GM12878 (cell line): ENCODE measurements at regions of chr2 and their contacts with region 1.

Region 1: DNA sequence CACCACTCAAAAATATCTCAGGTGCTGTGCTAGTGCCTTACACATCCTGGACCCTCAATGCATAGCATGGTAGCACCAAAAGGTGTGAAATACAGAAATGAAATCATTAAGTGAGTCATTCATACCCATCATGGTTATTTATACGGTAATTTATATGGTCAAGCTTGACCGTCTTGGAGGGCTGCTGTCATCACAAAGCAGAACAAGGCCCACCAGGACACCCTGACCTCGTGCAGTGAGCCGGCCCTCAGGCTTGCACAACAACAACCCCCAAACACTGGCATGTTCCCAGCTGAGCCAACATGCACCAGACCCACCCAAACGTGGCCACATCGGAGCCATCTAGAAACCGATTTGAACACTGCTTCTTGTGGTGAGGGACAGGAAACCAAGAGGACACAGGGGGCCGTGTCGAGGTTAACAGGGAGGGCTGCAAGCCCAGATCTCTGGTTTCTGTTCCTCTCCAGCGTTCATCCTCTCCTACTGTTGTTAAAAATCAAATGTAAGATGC is 378.5 kb upstream of the ID2 start:
- DNase-seq: peak; percentile 95
- ATAC-seq: peak; percentile 77
- H3K4me3 ChIP-seq: no peak overlapping the region
- H3K27ac ChIP-seq: peak overlapping the region; percentile 81
- H3K4me1 ChIP-seq: peaks cover 74% of the 10 kb centered on the region
- H3K27me3 ChIP-seq: no peaks in the 10 kb centered on the region
- CTCF ChIP-seq: peak in 1 of 3 experiments; percentile 4; a peak in 1 of 6 replicates
- EP300 ChIP-seq: peak; percentile 92 to 94
- POLR2A ChIP-seq: peak; percentile 27; the same call in 1 of the 2 replicates
- RAD21 ChIP-seq: peak; percentile 35; the same call in 1 of the 2 replicates

Region 2: DNA sequence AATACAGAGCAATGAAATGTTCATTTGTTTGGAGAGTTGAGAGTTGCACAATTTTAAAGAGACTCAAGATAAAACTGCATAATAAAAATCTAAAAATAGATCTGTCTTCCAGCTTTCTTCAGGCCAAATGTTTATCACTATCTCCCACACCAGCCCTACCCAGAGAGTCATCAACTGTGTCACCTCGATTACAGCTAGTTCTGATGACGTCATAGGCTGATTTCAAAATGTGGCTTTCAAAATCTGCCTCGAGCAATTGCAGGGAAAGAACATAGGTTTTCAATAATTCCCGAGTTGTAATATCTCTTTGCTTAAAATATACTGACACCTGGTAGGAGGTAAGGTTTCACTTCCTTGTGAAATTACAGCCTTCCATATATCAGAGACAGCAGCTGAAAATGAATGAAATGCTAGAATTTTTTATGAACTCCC is 299.1 kb before region 1 on chr2:
- CTCF ChIA-PET with region 1: no interaction called
- POLR2A ChIA-PET with region 1: no interaction called
- RAD21 ChIA-PET with region 1: interaction called, 3 read pairs
- SMC1A ChIA-PET with region 1: interaction called, 3 read pairs
- in situ Hi-C with region 1: no loop called
- intact Hi-C with region 1: loop called (anchors 2 kb)
- DNase-seq: no peak
- ATAC-seq: peak; percentile 46
- H3K4me3 ChIP-seq: no peak overlapping the region
- H3K27ac ChIP-seq: no peak overlapping the region
- H3K4me1 ChIP-seq: peaks cover 4% of the 10 kb centered on the region; the same call in 1 of the 2 replicates
- H3K27me3 ChIP-seq: no peaks in the 10 kb centered on the region
- CTCF ChIP-seq: no peak
- EP300 ChIP-seq: peak; percentile 69 to 79; a peak in 2 of 4 replicates
- POLR2A ChIP-seq: no peak
- RAD21 ChIP-seq: no peak

Region 3: DNA sequence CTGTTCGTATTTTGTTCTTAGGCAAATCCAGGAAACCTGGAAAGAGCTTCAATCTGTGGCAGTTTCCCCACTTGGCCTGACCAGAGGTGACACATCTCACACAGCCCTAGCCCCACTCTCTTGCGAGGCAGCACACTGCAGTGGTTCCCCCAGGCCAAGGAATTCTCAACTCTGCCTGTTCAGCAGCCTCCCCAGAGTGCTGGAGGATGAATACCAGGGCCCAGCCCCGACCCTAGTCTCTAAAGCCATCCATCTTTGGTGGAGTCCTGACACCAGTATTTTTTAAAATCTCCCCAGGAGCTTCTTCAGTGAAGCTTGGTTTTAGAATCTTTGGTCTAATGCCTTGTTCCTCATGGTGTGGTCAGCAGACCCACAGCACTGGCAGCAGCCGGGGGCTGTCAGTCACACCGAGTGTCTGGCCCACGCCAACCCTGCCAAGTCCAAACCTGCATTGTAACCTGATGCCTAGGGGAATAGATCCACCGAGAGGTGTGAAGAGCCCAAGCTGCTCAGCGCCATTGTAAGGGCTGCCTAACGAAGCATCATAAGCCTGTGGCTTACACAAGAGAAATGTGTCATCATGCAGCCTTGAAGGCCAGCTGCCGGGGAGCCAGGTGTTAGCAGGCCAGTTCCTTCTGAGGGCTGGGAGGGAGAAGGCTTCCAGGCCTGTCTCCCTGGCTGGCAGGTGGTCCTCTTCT is 50.2 kb before region 1 on chr2:
- CTCF ChIA-PET with region 1: no interaction called
- POLR2A ChIA-PET with region 1: interaction called, 3 read pairs
- RAD21 ChIA-PET with region 1: interaction called, 9 read pairs
- SMC1A ChIA-PET with region 1: interaction called, 4 read pairs
- in situ Hi-C with region 1: no loop called
- intact Hi-C with region 1: loop called (anchors 1 kb)
- DNase-seq: peak; percentile 48
- ATAC-seq: peak; percentile 98
- H3K4me3 ChIP-seq: no peak overlapping the region
- H3K27ac ChIP-seq: no peak overlapping the region
- H3K4me1 ChIP-seq: peaks cover 20% of the 10 kb centered on the region
- H3K27me3 ChIP-seq: no peaks in the 10 kb centered on the region
- CTCF ChIP-seq: no peak
- EP300 ChIP-seq: peak; percentile 38 to 47; a peak in 1 of 4 replicates
- POLR2A ChIP-seq: no peak
- RAD21 ChIP-seq: no peak

Region 4: GRCh38 chr2:8290771-8291352 is 12.5 kb before region 1 on chr2:
- CTCF ChIA-PET with region 1: interaction called, 20 read pairs
- POLR2A ChIA-PET with region 1: no interaction called
- RAD21 ChIA-PET with region 1: interaction called, 4 read pairs
- SMC1A ChIA-PET with region 1: interaction called, 18 read pairs
- in situ Hi-C with region 1: no loop called
- intact Hi-C with region 1: no loop called
- DNase-seq: no peak
- ATAC-seq: no peak
- H3K4me3 ChIP-seq: no peak overlapping the region
- H3K27ac ChIP-seq: no peak overlapping the region
- H3K4me1 ChIP-seq: no peaks in the 10 kb centered on the region
- H3K27me3 ChIP-seq: no peaks in the 10 kb centered on the region
- CTCF ChIP-seq: no peak
- EP300 ChIP-seq: no peak
- POLR2A ChIP-seq: no peak
- RAD21 ChIP-seq: no peak

Region 5: DNA sequence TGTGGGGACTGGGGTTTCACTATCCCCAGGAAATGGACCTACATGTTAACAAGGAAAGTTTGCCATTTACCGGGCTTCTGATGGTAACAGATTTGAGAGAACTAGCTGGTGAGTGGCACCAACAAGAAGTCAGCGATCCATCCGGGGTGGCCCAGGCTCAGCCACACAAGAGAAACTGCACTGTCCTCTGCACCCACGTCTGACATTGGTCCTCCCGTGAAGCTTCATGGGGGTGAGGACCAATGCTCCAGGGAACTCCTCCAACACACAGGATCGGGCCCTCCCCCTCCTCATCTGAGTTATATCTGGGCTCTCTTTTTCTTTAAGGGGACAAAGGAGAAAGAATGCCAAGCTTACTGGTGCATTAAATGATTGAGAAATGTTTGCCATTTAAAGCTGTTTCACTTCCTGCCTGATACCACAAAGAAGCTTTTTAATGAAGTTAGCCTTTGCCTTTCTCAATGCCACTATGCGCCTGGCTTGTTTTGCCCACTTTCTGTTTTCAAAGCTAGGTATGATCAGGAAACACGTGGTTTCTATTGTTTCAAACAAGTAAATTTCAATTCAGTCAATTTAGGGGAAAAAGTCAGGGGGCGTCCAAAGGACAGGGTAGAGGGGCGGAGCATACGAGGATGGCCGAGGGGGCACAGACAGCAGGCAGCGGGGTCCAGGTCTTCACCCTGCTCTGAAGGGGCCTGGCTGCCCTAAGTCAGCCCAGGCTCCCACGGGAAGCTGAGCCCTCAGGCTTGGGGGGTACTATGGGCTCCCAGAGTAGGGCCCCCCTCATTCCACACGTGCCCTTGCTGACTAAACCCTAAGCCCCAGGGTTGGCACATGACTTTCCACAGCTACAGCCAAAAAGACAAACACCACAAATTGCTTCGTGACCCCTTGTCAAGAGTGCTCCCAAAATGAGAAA is 174.4 kb after region 1 on chr2:
- CTCF ChIA-PET with region 1: no interaction called
- POLR2A ChIA-PET with region 1: interaction called, 4 read pairs
- RAD21 ChIA-PET with region 1: no interaction called
- SMC1A ChIA-PET with region 1: interaction called, 5 read pairs
- in situ Hi-C with region 1: loop called (anchors 5 kb)
- intact Hi-C with region 1: loop called (anchors 2 kb)
- DNase-seq: peak; percentile 95
- ATAC-seq: peak; percentile 52
- H3K4me3 ChIP-seq: peak overlapping the region; percentile 43; the same call in 1 of the 2 replicates
- H3K27ac ChIP-seq: peak overlapping the region; percentile 62
- H3K4me1 ChIP-seq: peaks cover 68% of the 10 kb centered on the region
- H3K27me3 ChIP-seq: no peaks in the 10 kb centered on the region
- CTCF ChIP-seq: no peak
- EP300 ChIP-seq: peak; percentile 94 to 96
- POLR2A ChIP-seq: no peak
- RAD21 ChIP-seq: no peak

Region 6: GRCh38 chr2:8606226-8606625 is 302.8 kb after region 1 on chr2:
- CTCF ChIA-PET with region 1: no interaction called
- POLR2A ChIA-PET with region 1: no interaction called
- RAD21 ChIA-PET with region 1: no interaction called
- SMC1A ChIA-PET with region 1: no interaction called
- in situ Hi-C with region 1: no loop called
- intact Hi-C with region 1: loop called (anchors 10 kb)
- DNase-seq: peak; percentile 82
- ATAC-seq: peak; percentile 90
- H3K4me3 ChIP-seq: no peak overlapping the region
- H3K27ac ChIP-seq: peak overlapping the region; percentile 23
- H3K4me1 ChIP-seq: peaks cover 30% of the 10 kb centered on the region
- H3K27me3 ChIP-seq: no peaks in the 10 kb centered on the region
- CTCF ChIP-seq: no peak
- EP300 ChIP-seq: peak; percentile 38 to 40; a peak in 2 of 4 replicates
- POLR2A ChIP-seq: no peak
- RAD21 ChIP-seq: no peak